Sigmoid colon (tissue), 7 donors: ENCODE measurements at regions of chr19 and their contacts with region 1.

Region 1: DNA sequence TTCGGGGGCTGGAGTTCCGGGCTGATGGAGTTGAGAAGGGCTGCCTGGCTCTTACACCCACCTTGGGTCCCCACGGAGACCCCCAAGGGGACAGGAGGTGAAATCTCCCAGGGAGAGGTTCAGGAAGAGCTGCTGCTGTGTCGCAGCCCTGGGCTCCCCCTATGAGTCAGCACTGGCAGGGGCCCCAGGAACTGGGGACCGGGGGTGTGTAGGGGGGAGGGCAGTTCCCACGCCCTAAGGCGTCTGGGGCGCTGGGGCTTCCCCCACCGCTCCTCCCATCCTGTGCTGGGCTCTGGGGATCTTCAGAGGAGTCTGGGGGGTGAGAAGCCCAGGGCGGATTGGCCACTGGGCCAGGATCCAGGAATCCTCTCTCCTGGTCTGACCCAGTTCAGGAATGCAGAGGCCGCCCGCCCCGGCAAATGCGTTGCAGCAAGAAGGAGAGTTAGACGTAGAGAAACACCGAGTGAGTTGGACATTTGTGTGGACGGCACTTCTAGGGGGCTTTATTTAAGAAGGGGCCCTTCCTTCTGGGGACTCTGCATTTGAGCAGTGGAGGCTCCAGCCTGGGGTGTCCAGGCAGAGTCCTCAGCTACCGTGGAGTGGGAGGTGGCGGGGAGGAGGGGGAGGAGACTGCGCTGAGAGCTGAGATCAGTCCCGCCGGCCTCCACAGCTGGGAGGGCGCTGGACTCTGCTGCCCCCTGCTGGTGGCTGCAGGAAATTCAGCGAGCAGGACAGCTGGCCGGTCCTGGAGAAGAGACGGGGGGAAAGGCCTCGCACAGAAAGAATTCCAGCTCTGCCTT is 15.0 kb upstream of the NANOS3 start:
- DNase-seq: peak; percentile 97
- H3K4me3 ChIP-seq: peak overlapping the region; percentile 11 to 52 (median 40)
- H3K27ac ChIP-seq: peak overlapping the region; percentile 89 to 97 (median 93)
- H3K4me1 ChIP-seq: peaks cover 0 to 39% (median 26%) of the 10 kb centered on the region in 4 donors
- H3K27me3 ChIP-seq: no peaks in the 10 kb centered on the region
- CTCF ChIP-seq: peak; percentile 98 to 100 (median 99)
- EP300 ChIP-seq: peak in 2 of 4 donors; percentile 5 to 31
- POLR2A ChIP-seq: peak; percentile 25 to 32

Region 2: GRCh38 chr19:13784731-13785452 is 77.0 kb before region 1 on chr19:
- intact Hi-C with region 1: loop called (anchors 1 kb)
- DNase-seq: peak; percentile 83
- H3K4me3 ChIP-seq: no peak overlapping the region
- H3K27ac ChIP-seq: peak overlapping the region in 3 of 4 donors; percentile 9 to 59 (median 25)
- H3K4me1 ChIP-seq: peaks cover 0 to 52% (median 33%) of the 10 kb centered on the region in 4 donors
- H3K27me3 ChIP-seq: no peaks in the 10 kb centered on the region
- CTCF ChIP-seq: peak in 3 of 4 experiments; percentile 56 to 70 (median 60)
- EP300 ChIP-seq: no peak
- POLR2A ChIP-seq: no peak

Region 3: GRCh38 chr19:13804830-13805683 is 56.9 kb before region 1 on chr19:
- intact Hi-C with region 1: loop called (anchors 2 kb)
- DNase-seq: peak; percentile 79
- H3K4me3 ChIP-seq: no peak overlapping the region
- H3K27ac ChIP-seq: no peak overlapping the region
- H3K4me1 ChIP-seq: peaks cover 0 to 6% (median 0%) of the 10 kb centered on the region in 4 donors
- H3K27me3 ChIP-seq: no peaks in the 10 kb centered on the region
- CTCF ChIP-seq: peak; percentile 42 to 56 (median 48)
- EP300 ChIP-seq: no peak
- POLR2A ChIP-seq: no peak

Region 4: GRCh38 chr19:14006243-14006765 is 144.4 kb after region 1 on chr19 and contains the start of gene RFX1:
- intact Hi-C with region 1: no loop called
- DNase-seq: peak; percentile 100
- H3K4me3 ChIP-seq: peak within 1 kb of the TSS; percentile 73 to 97 (median 96)
- H3K27ac ChIP-seq: peak within 1 kb of the TSS; percentile 98 to 100 (median 99)
- H3K4me1 ChIP-seq: peaks cover 0 to 30% (median 24%) of the 10 kb centered on the region in 4 donors
- H3K27me3 ChIP-seq: no peaks in the 10 kb centered on the region
- CTCF ChIP-seq: no peak
- EP300 ChIP-seq: peak in 1 of 4 donors; percentile 46
- POLR2A ChIP-seq: no peak
- total RNA-seq, gene RFX1: 1.6 to 5.0 (median 1.9) TPM